Common myeloid progenitor, CD34-positive (primary cell): ENCODE measurements at regions of chr20 and their contacts with region 1.

Region 1: GRCh38 chr20:37737826-37738420 is 44.1 kb downstream of the CTNNBL1 start:
- DNase-seq: peak; percentile 10 to 63 (median 49)
- H3K4me3 ChIP-seq: no peak overlapping the region
- H3K27ac ChIP-seq: no peak overlapping the region
- H3K4me1 ChIP-seq: peaks cover 0 to 7% (median 0%) of the 10 kb centered on the region in 4 experiments
- H3K27me3 ChIP-seq: no peaks in the 10 kb centered on the region

Region 2: GRCh38 chr20:37726971-37727956 is 10.7 kb before region 1 on chr20:
- CTCF ChIA-PET with region 1: interaction called, 11 read pairs
- POLR2A ChIA-PET with region 1: interaction called, 3 read pairs
- DNase-seq: no peak
- H3K4me3 ChIP-seq: no peak overlapping the region
- H3K27ac ChIP-seq: no peak overlapping the region
- H3K4me1 ChIP-seq: peaks cover 0 to 3% (median 0%) of the 10 kb centered on the region in 4 experiments
- H3K27me3 ChIP-seq: no peaks in the 10 kb centered on the region

Region 3: GRCh38 chr20:37833221-37833896 is 95.4 kb after region 1 on chr20:
- CTCF ChIA-PET with region 1: no interaction called
- POLR2A ChIA-PET with region 1: no interaction called
- DNase-seq: peak in 1 of 3 donors; percentile 10
- H3K4me3 ChIP-seq: no peak overlapping the region
- H3K27ac ChIP-seq: no peak overlapping the region
- H3K4me1 ChIP-seq: peaks cover 0 to 2% (median 0%) of the 10 kb centered on the region in 4 experiments
- H3K27me3 ChIP-seq: no peaks in the 10 kb centered on the region